ENCODE measurements at regions of chr3 and their contacts with region 1.

Region 1: GRCh38 chr3:13495921-13496723 is 16.0 kb downstream of the HDAC11 start:
- DNase-seq: peak; percentile 79 to 97 (median 84)

Region 2: DNA sequence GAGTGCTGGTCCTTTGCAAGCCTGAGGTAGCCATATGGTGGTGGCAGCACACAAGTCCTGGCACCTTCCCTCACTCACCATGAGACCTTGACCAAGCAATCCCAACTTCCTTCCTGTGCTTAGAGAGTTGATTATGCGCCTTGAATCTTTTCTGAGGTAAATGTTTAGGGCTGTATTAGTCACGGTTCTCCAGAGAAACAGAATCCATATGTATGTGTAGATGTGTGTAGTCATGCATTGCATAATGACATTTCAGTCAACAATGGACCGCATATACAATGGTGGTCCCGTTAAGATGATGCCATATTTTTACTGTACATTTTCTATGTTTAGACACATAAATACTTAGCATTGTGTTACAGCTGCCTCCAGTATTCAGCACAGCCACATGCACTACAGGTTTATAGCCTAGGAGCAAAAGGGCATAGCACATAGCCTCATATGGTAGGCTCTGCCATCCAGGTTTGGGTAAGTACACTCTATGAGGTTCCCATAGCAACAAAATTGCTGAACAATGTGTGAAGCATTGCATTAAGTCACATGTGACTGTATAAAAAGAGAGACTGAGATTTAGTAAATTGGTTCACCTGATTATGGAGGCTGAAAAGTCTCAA is 55.8 kb before region 1 on chr3:
- intact Hi-C with region 1: no loop called
- DNase-seq: no peak

Region 3: GRCh38 chr3:13479581-13480339 is 16.4 kb before region 1 on chr3 and contains the start of gene HDAC11:
- intact Hi-C with region 1: loop called (anchors 2 kb)
- DNase-seq: peak; percentile 99 to 100 (median 100)

Measured in posterior cingulate gyrus (tissue), 11 donors.